ENCODE measurements at regions of chr3 and their contacts with region 1.

Region 1: GRCh38 chr3:167929968-167930367 is 165.8 kb downstream of the GOLIM4 start:
- DNase-seq: no peak
- ATAC-seq: peak; percentile 77

Region 2: DNA sequence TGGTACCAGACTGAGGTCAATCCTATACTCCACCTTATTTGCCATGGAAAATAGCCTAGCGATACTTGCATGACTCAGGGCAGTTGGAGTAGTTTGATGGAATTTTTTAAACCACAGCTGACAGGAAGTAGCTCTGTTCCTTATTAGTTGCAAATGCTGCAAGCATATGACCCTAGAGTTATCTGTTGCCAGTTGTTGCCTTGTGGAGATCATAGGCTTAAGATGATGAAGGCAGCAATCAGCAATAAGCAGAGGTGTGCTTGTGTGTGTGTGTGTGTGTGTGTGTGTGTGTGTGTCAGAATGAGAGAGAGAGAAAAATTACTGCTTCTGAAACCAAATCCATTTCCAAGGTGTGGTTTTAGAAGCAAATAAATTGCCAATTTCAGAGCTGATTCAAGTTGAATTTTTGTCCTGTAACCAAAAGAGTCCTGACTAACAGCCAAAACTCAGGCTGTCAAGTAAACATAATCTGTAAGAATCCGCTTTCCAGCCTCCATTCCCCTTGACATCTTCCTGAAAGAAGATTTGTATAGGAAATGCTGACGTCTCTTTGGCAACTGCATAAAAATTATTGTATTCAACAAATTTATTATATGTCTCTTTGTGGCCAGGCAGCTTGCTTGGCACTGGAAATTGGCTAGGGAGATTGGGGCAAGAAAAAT is 53.2 kb before region 1 on chr3:
- intact Hi-C with region 1: no loop called
- DNase-seq: no peak
- ATAC-seq: peak; percentile 71

Region 3: GRCh38 chr3:168040607-168041208 is 110.7 kb after region 1 on chr3:
- intact Hi-C with region 1: loop called (anchors 1 kb)
- DNase-seq: no peak
- ATAC-seq: peak; percentile 79